Activated CD4-positive, alpha-beta T cell treated with anti-CD3 and anti-CD28 coated beads for 36 hours (primary cell): ENCODE measurements at regions of chr5 and their contacts with region 1.

Region 1: GRCh38 chr5:35926389-35927051 is 11.9 kb downstream of the CAPSL start:
- DNase-seq: peak; percentile 76
- ATAC-seq: peak; percentile 42
- H3K4me3 Mint-ChIP-seq: peak overlapping the region; percentile 78
- H3K27ac Mint-ChIP-seq: peak overlapping the region; percentile 69
- H3K4me1 Mint-ChIP-seq: peaks cover 49% of the 10 kb centered on the region
- H3K27me3 Mint-ChIP-seq: no peaks in the 10 kb centered on the region

Region 2: DNA sequence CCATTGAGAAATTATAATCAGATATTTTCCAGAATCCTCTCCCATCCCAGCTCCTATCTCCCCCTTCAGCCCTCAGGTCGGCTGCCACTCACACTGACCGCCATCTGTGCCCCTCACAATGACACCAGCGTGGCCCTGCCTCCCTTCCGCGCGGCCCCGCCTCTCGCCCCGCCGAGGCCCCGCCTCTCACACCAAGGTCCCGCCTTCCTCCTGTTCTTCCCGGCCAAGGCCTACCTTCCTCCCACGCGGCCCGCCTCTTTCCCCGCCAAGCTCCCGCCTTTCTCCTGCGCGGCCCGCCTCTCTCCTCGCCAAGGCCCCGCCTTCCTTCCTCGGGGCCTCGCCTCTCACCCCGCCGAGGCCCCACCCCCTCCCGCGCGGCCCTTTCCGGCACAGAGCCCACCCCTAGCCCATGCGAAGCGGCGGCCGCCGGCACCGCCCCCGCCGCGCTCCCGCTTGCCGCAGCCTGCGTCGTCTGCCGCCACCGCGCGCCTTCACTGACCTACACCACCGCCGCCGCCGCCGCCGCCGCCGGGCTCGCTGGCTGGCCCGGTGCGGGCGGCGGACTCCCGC is 997.3 kb before region 1 on chr5 and contains the start of gene DNAJC21:
- CTCF ChIA-PET with region 1: no interaction called
- POLR2A ChIA-PET with region 1: no interaction called
- intact Hi-C with region 1: loop called in 1 of 2 experiments (anchors 10 kb)
- DNase-seq: peak; percentile 99
- ATAC-seq: peak; percentile 95
- H3K4me3 Mint-ChIP-seq: peak within 1 kb of the TSS; percentile 90
- H3K27ac Mint-ChIP-seq: peak within 1 kb of the TSS; percentile 93
- H3K4me1 Mint-ChIP-seq: peaks cover 43% of the 10 kb centered on the region
- H3K27me3 Mint-ChIP-seq: no peaks in the 10 kb centered on the region
- total RNA-seq, gene DNAJC21: 58.5 to 58.6 TPM

Region 3: GRCh38 chr5:35319333-35320002 is 607.1 kb before region 1 on chr5:
- CTCF ChIA-PET with region 1: no interaction called
- POLR2A ChIA-PET with region 1: no interaction called
- intact Hi-C with region 1: loop called (anchors 5 to 10 kb)
- DNase-seq: peak; percentile 92
- ATAC-seq: peak; percentile 91
- H3K4me3 Mint-ChIP-seq: no peak overlapping the region
- H3K27ac Mint-ChIP-seq: no peak overlapping the region
- H3K4me1 Mint-ChIP-seq: peaks cover 30% of the 10 kb centered on the region
- H3K27me3 Mint-ChIP-seq: peaks cover 14% of the 10 kb centered on the region

Region 4: GRCh38 chr5:35656721-35657120 is 269.8 kb before region 1 on chr5:
- CTCF ChIA-PET with region 1: interaction called, 111 read pairs
- POLR2A ChIA-PET with region 1: no interaction called
- intact Hi-C with region 1: loop called (anchors 1 kb)
- DNase-seq: no peak
- ATAC-seq: no peak
- H3K4me3 Mint-ChIP-seq: no peak overlapping the region
- H3K27ac Mint-ChIP-seq: no peak overlapping the region
- H3K4me1 Mint-ChIP-seq: peaks cover 41% of the 10 kb centered on the region
- H3K27me3 Mint-ChIP-seq: no peaks in the 10 kb centered on the region

Region 5: GRCh38 chr5:35815089-35815936 is 111.2 kb before region 1 on chr5:
- CTCF ChIA-PET with region 1: interaction called, 27 read pairs
- POLR2A ChIA-PET with region 1: interaction called, 3 read pairs
- intact Hi-C with region 1: loop called in 1 of 2 experiments (anchors 2 kb)
- DNase-seq: peak; percentile 72
- ATAC-seq: peak; percentile 41
- H3K4me3 Mint-ChIP-seq: no peak overlapping the region
- H3K27ac Mint-ChIP-seq: no peak overlapping the region
- H3K4me1 Mint-ChIP-seq: peaks cover 56% of the 10 kb centered on the region
- H3K27me3 Mint-ChIP-seq: no peaks in the 10 kb centered on the region

Region 6: GRCh38 chr5:35852084-35852734 is 74.3 kb before region 1 on chr5:
- CTCF ChIA-PET with region 1: interaction called, 15 read pairs
- POLR2A ChIA-PET with region 1: interaction called, 8 read pairs
- intact Hi-C with region 1: loop called (anchors 1 kb)
- DNase-seq: peak; percentile 74
- ATAC-seq: peak; percentile 43
- H3K4me3 Mint-ChIP-seq: peak overlapping the region; percentile 89
- H3K27ac Mint-ChIP-seq: peak overlapping the region; percentile 99
- H3K4me1 Mint-ChIP-seq: peaks cover 68% of the 10 kb centered on the region
- H3K27me3 Mint-ChIP-seq: no peaks in the 10 kb centered on the region

Region 7: GRCh38 chr5:35908228-35908627 is 18.3 kb before region 1 on chr5:
- CTCF ChIA-PET with region 1: interaction called, 15 read pairs
- POLR2A ChIA-PET with region 1: interaction called, 5 read pairs
- intact Hi-C with region 1: loop called (anchors 1 kb)
- DNase-seq: no peak
- ATAC-seq: peak; percentile 9
- H3K4me3 Mint-ChIP-seq: no peak overlapping the region
- H3K27ac Mint-ChIP-seq: peak overlapping the region; percentile 72
- H3K4me1 Mint-ChIP-seq: peaks cover 55% of the 10 kb centered on the region
- H3K27me3 Mint-ChIP-seq: no peaks in the 10 kb centered on the region

Region 8: DNA sequence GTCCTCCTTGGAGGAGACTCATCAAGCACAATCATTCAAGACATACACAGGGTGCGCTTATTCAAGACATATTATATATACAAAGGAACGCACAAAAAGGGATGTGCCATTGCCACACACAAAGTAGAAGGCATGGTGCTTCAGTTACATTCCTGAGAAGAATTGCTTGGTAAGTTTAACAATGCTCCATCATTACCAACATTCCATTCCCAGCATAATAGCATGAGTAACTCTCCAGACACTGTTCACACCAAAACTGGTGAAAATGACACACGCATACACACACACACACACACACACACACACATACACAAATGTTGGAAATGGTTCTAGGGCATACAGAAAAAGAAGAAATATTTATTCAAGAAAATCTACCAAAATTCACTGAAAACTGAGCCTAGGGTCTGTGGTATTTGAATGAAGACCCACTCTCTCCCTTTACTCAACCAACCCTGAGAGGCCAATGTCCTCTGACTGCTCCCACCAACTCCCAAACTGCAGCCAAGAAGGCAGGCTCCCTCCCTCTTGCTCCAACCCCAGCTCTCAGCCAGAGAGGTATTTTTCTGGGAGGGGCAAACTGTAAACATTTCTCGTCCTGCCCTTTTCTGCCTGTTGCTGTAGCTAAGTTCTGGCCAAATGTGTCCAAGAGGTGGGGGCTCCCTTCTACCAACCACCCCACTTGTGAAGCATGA is 44.8 kb after region 1 on chr5:
- CTCF ChIA-PET with region 1: no interaction called
- POLR2A ChIA-PET with region 1: no interaction called
- intact Hi-C with region 1: no loop called
- DNase-seq: no peak
- ATAC-seq: no peak
- H3K4me3 Mint-ChIP-seq: no peak overlapping the region
- H3K27ac Mint-ChIP-seq: no peak overlapping the region
- H3K4me1 Mint-ChIP-seq: no peaks in the 10 kb centered on the region
- H3K27me3 Mint-ChIP-seq: peaks cover 8% of the 10 kb centered on the region